ENCODE measurements at regions of chr2 and their contacts with region 1.

Region 1: GRCh38 chr2:110865188-110865587 is 132.8 kb downstream of the ACOXL start:
- DNase-seq: no peak
- ATAC-seq: peak; percentile 44
- H3K4me3 ChIP-seq: no peak overlapping the region
- H3K4me3 Mint-ChIP-seq: peak overlapping the region; percentile 47
- H3K27ac ChIP-seq: no peak overlapping the region
- H3K27ac Mint-ChIP-seq: peak overlapping the region; percentile 3
- H3K4me1 ChIP-seq: peaks cover 18% of the 10 kb centered on the region
- H3K4me1 Mint-ChIP-seq: peaks cover 35% of the 10 kb centered on the region
- H3K27me3 ChIP-seq: no peaks in the 10 kb centered on the region
- H3K27me3 Mint-ChIP-seq: no peaks in the 10 kb centered on the region
- CTCF ChIP-seq: no peak

Region 2: GRCh38 chr2:110828330-110828729 is 36.9 kb before region 1 on chr2:
- CTCF ChIA-PET with region 1: no interaction called
- POLR2A ChIA-PET with region 1: no interaction called
- intact Hi-C with region 1: loop called in 1 of 2 experiments (anchors 5 kb)
- DNase-seq: no peak
- ATAC-seq: no peak
- H3K4me3 ChIP-seq: no peak overlapping the region
- H3K4me3 Mint-ChIP-seq: no peak overlapping the region
- H3K27ac ChIP-seq: no peak overlapping the region
- H3K27ac Mint-ChIP-seq: no peak overlapping the region
- H3K4me1 ChIP-seq: peaks cover 8% of the 10 kb centered on the region
- H3K4me1 Mint-ChIP-seq: peaks cover 18% of the 10 kb centered on the region
- H3K27me3 ChIP-seq: no peaks in the 10 kb centered on the region
- H3K27me3 Mint-ChIP-seq: no peaks in the 10 kb centered on the region
- CTCF ChIP-seq: no peak

Region 3: DNA sequence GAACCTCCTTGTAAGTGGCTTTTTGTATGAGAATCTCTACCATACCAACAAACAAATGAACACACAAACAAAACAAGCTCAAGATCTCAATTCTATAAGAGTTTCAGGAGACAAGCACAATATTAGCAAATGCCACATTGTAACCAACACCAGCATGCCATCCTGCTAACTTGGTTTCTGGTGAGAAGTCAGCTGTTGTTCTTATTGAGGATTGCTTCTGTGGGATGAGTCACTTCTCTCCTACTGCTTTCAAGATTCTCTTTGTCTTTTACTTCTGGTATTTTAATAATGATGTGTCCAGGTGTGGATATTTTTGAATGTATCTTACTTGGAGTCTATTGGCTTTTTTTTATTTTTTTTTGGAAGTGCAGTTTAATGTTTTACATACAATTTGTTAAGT is 387.2 kb after region 1 on chr2:
- CTCF ChIA-PET with region 1: no interaction called
- POLR2A ChIA-PET with region 1: no interaction called
- intact Hi-C with region 1: no loop called
- DNase-seq: no peak
- ATAC-seq: no peak
- H3K4me3 ChIP-seq: no peak overlapping the region
- H3K4me3 Mint-ChIP-seq: no peak overlapping the region
- H3K27ac ChIP-seq: no peak overlapping the region
- H3K27ac Mint-ChIP-seq: no peak overlapping the region
- H3K4me1 ChIP-seq: no peaks in the 10 kb centered on the region
- H3K4me1 Mint-ChIP-seq: no peaks in the 10 kb centered on the region
- H3K27me3 ChIP-seq: no peaks in the 10 kb centered on the region
- H3K27me3 Mint-ChIP-seq: no peaks in the 10 kb centered on the region
- CTCF ChIP-seq: no peak

Measured in CD8-positive, alpha-beta T cell (primary cell).